Activated B cell treated with CpG ODN at 0.5 μM for 24 hours (primary cell): ENCODE measurements at regions of chr14 and their contacts with region 1.

Region 1: GRCh38 chr14:64294672-64295413 is 672 bp upstream of the ESR2 start:
- DNase-seq: peak; percentile 92
- ATAC-seq: peak; percentile 91
- H3K4me3 Mint-ChIP-seq: peak overlapping the region; percentile 91
- H3K27ac Mint-ChIP-seq: peak overlapping the region; percentile 80
- H3K4me1 Mint-ChIP-seq: peaks cover 23% of the 10 kb centered on the region
- H3K27me3 Mint-ChIP-seq: no peaks in the 10 kb centered on the region
- CTCF ChIP-seq: peak; percentile 56

Region 2: DNA sequence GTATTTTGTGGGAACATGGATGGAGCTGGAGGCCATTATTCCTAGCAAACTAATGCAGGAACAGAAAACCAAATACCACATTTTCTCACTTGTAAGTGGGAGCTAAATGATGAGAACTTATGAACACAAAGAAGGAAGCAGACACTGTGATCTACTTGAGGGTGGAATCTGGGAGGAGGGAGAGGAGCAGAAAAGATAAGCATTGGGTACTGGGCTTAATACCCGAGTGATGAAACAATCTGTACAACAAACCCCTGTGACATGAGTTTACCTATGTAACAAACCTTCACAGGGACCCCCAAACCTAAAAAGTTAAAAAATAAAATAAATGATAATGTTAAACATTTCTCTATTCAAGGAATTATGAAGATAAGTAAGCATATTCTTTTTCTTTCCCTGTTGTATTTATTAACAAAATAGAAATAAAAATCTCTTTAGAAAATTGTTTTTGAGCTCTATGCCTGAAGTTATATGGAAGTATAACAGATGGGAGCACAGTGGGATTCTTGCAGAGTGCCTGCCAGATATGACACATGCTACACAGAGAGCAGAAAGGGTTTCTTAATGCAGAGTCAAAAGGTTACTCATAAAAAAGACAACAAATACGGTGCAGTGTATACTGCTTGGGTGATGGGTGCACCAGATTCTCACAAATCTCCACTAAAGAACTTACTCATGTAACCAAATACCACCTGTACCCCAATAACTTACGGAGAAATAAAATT is 494.0 kb before region 1 on chr14:
- CTCF ChIA-PET with region 1: interaction called, 10 read pairs
- POLR2A ChIA-PET with region 1: no interaction called
- intact Hi-C with region 1: loop called (anchors 1 kb)
- DNase-seq: no peak
- ATAC-seq: no peak
- H3K4me3 Mint-ChIP-seq: no peak overlapping the region
- H3K27ac Mint-ChIP-seq: no peak overlapping the region
- H3K4me1 Mint-ChIP-seq: peaks cover 3% of the 10 kb centered on the region
- H3K27me3 Mint-ChIP-seq: no peaks in the 10 kb centered on the region
- CTCF ChIP-seq: no peak

Region 3: DNA sequence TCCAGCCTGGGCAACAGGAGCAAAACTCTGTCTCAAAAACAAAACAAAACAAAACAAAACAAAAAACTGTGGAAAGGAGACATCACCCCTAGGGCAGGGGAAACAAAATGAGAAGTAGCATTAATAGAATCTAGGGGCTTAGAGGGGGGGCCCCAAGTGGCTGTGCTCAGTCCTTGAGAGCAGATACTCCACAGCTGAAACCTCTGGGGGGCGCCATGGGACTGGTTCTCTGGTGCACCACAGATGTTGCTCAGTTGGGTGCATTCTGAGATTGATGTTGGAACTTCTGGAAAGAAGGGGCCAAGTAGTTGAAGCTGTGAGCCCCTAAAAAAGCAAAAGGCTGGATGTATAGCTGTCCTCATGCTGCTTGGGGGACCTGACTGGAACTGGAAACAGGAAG is 453.9 kb before region 1 on chr14:
- CTCF ChIA-PET with region 1: no interaction called
- POLR2A ChIA-PET with region 1: no interaction called
- intact Hi-C with region 1: no loop called
- DNase-seq: no peak
- ATAC-seq: no peak
- H3K4me3 Mint-ChIP-seq: no peak overlapping the region
- H3K27ac Mint-ChIP-seq: no peak overlapping the region
- H3K4me1 Mint-ChIP-seq: no peaks in the 10 kb centered on the region
- H3K27me3 Mint-ChIP-seq: no peaks in the 10 kb centered on the region
- CTCF ChIP-seq: no peak

Region 4: GRCh38 chr14:64012720-64013119 is 282.1 kb before region 1 on chr14:
- CTCF ChIA-PET with region 1: interaction called, 13 read pairs
- POLR2A ChIA-PET with region 1: no interaction called
- intact Hi-C with region 1: loop called (anchors 1 kb)
- DNase-seq: no peak
- ATAC-seq: no peak
- H3K4me3 Mint-ChIP-seq: no peak overlapping the region
- H3K27ac Mint-ChIP-seq: no peak overlapping the region
- H3K4me1 Mint-ChIP-seq: no peaks in the 10 kb centered on the region
- H3K27me3 Mint-ChIP-seq: no peaks in the 10 kb centered on the region
- CTCF ChIP-seq: no peak

Region 5: GRCh38 chr14:64060648-64061096 is 234.2 kb before region 1 on chr14:
- CTCF ChIA-PET with region 1: interaction called, 14 read pairs
- POLR2A ChIA-PET with region 1: no interaction called
- intact Hi-C with region 1: loop called (anchors 1 kb)
- DNase-seq: no peak
- ATAC-seq: peak; percentile 49
- H3K4me3 Mint-ChIP-seq: no peak overlapping the region
- H3K27ac Mint-ChIP-seq: no peak overlapping the region
- H3K4me1 Mint-ChIP-seq: no peaks in the 10 kb centered on the region
- H3K27me3 Mint-ChIP-seq: no peaks in the 10 kb centered on the region
- CTCF ChIP-seq: no peak

Region 6: DNA sequence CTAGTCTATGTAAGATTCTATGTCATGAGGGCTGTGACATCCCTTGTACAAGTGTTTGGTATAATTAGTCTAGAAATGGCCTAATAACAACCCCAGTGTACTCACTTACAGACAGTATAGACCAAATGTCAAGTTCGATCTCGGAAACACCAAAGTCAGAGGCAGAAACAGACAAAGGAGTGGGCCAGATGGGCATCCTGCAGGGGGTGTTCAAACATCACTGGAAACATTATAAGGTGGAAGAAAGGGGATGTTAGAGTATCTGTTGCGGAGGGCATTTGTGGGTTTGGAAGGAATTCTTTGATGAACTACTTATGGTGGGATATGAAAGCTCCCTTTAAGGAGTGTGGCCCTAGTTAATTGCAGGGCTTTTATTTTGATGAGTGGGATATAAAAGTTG is 135.3 kb before region 1 on chr14:
- CTCF ChIA-PET with region 1: interaction called, 51 read pairs
- POLR2A ChIA-PET with region 1: interaction called, 5 read pairs
- intact Hi-C with region 1: loop called (anchors 1 kb)
- DNase-seq: no peak
- ATAC-seq: peak; percentile 47
- H3K4me3 Mint-ChIP-seq: no peak overlapping the region
- H3K27ac Mint-ChIP-seq: no peak overlapping the region
- H3K4me1 Mint-ChIP-seq: peaks cover 6% of the 10 kb centered on the region
- H3K27me3 Mint-ChIP-seq: no peaks in the 10 kb centered on the region
- CTCF ChIP-seq: no peak

Region 7: GRCh38 chr14:64209444-64210131 is 85.3 kb before region 1 on chr14:
- CTCF ChIA-PET with region 1: interaction called, 13 read pairs
- POLR2A ChIA-PET with region 1: interaction called, 10 read pairs
- intact Hi-C with region 1: loop called (anchors 1 kb)
- DNase-seq: no peak
- ATAC-seq: peak; percentile 88
- H3K4me3 Mint-ChIP-seq: peak overlapping the region; percentile 65
- H3K27ac Mint-ChIP-seq: peak overlapping the region; percentile 82
- H3K4me1 Mint-ChIP-seq: peaks cover 33% of the 10 kb centered on the region
- H3K27me3 Mint-ChIP-seq: no peaks in the 10 kb centered on the region
- CTCF ChIP-seq: no peak

Region 8: DNA sequence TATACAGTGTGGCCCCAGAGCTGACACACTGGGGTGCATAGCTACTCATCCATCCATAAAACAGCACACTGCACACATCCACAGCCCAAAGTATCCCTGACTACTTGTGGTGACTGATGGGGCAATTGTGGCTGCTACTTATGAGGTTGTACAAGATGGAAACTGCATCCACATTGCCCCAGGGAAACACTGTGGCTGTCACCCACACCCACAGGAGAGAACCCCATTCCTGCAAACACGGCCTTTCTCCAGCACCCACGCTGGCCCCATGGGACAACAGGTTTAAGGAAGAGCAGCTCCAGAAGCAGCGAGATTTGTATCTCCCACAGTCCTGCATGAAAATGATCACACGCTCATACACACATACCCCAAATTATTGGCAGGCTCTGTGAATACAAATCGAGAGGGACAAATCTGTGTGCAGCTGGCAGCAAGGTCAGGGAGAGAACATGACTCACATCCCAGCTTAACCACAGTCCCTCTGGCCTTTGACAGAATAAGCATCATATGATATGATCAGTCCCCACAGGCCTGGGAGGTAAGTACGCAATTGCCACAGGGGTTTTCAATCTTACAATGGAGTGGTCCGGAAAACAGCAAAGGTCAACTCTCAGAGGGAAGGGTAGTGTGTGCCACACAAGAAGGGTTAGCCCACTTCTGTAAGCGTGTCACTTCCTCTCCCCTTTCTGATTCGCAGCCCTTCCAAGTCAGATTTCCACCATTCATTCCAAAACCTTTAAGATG is 62.6 kb before region 1 on chr14:
- CTCF ChIA-PET with region 1: interaction called, 44 read pairs
- POLR2A ChIA-PET with region 1: interaction called, 77 read pairs
- intact Hi-C with region 1: loop called (anchors 1 kb)
- DNase-seq: no peak
- ATAC-seq: peak; percentile 11
- H3K4me3 Mint-ChIP-seq: peak overlapping the region; percentile 53
- H3K27ac Mint-ChIP-seq: peak overlapping the region; percentile 97
- H3K4me1 Mint-ChIP-seq: peaks cover 61% of the 10 kb centered on the region
- H3K27me3 Mint-ChIP-seq: no peaks in the 10 kb centered on the region
- CTCF ChIP-seq: no peak

Region 9: DNA sequence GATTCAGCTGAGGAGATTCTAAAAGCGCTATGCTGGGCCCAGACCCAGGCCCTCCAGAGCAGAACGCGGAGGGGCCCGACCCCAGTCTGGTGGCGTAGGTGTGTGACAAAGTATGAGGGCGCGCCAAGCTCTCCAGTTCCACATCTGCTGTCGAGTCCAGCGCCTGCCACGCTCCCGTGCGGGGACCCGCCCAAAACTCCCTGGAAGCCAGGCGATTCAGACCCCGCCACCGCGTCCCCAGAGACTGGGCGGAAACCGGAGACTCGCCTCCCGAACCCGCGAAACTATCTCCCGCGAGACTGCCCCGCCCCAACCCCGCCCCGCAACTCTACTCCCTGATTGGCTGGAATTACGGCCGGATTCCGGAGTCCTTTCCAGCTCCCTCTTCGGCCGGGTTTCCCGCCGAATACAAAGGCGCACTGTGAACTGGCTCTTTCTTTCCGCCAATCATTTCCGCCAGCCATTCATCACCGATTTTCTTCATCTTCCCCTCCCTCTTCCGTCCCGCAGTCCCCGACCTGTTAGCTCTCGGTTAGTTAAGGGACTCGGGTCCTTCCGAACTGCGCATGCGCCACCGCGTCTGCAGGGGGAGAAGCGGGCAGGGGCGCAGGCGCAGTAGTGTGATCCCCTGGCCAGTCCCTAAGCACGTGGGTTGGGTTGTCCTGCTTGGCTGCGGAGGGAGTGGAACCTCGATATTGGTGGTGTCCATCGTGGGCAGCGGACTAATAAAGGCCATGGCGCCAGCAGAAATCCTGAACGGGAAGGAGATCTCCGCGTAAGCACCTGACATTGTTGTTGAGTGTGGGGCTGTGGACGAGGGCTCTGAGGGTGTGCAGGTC is 93.1 kb after region 1 on chr14 and contains the start of gene MTHFD1:
- CTCF ChIA-PET with region 1: no interaction called
- POLR2A ChIA-PET with region 1: no interaction called
- intact Hi-C with region 1: no loop called
- DNase-seq: peak; percentile 93
- ATAC-seq: peak; percentile 79
- H3K4me3 Mint-ChIP-seq: peak within 1 kb of the TSS; percentile 94
- H3K27ac Mint-ChIP-seq: peak within 1 kb of the TSS; percentile 94
- H3K4me1 Mint-ChIP-seq: peaks cover 52% of the 10 kb centered on the region
- H3K27me3 Mint-ChIP-seq: no peaks in the 10 kb centered on the region
- CTCF ChIP-seq: no peak
- total RNA-seq, gene MTHFD1: 91.4 and 98.4 TPM in 2 replicates